PC-3 (cell line): ENCODE measurements at regions of chr5 and their contacts with region 1.

Region 1: GRCh38 chr5:149731639-149732323 is 1.7 kb downstream of the PPARGC1B start:
- DNase-seq: peak; percentile 93
- ATAC-seq: peak; percentile 57
- H3K4me3 ChIP-seq: peak overlapping the region; percentile 82
- H3K27ac ChIP-seq: 0 out of 2 replicates have a peak overlapping the region, but pooled peaks have one; percentile 11
- H3K4me1 ChIP-seq: peaks cover 22% of the 10 kb centered on the region
- H3K27me3 ChIP-seq: no peaks in the 10 kb centered on the region
- CTCF ChIP-seq: no peak

Region 2: GRCh38 chr5:149636851-149637246 is 94.9 kb before region 1 on chr5:
- CTCF ChIA-PET with region 1: no interaction called
- POLR2A ChIA-PET with region 1: interaction called, 9 read pairs
- intact Hi-C with region 1: loop called (anchors 2 kb)
- DNase-seq: peak; percentile 98
- ATAC-seq: peak; percentile 85
- H3K4me3 ChIP-seq: no peak overlapping the region
- H3K27ac ChIP-seq: no peak overlapping the region
- H3K4me1 ChIP-seq: peaks cover 26% of the 10 kb centered on the region
- H3K27me3 ChIP-seq: no peaks in the 10 kb centered on the region
- CTCF ChIP-seq: peak; percentile 100

Region 3: GRCh38 chr5:149697001-149697400 is 34.8 kb before region 1 on chr5:
- CTCF ChIA-PET with region 1: interaction called, 7 read pairs
- POLR2A ChIA-PET with region 1: interaction called, 10 read pairs
- intact Hi-C with region 1: loop called (anchors 1 kb)
- DNase-seq: peak; percentile 89
- ATAC-seq: peak; percentile 81
- H3K4me3 ChIP-seq: no peak overlapping the region
- H3K27ac ChIP-seq: no peak overlapping the region
- H3K4me1 ChIP-seq: peaks cover 18% of the 10 kb centered on the region
- H3K27me3 ChIP-seq: no peaks in the 10 kb centered on the region
- CTCF ChIP-seq: no peak

Region 4: GRCh38 chr5:149828161-149828884 is 96.5 kb after region 1 on chr5:
- CTCF ChIA-PET with region 1: no interaction called
- POLR2A ChIA-PET with region 1: no interaction called
- intact Hi-C with region 1: loop called (anchors 1 kb)
- DNase-seq: peak; percentile 97
- ATAC-seq: peak; percentile 95
- H3K4me3 ChIP-seq: no peak overlapping the region
- H3K27ac ChIP-seq: no peak overlapping the region
- H3K4me1 ChIP-seq: no peaks in the 10 kb centered on the region
- H3K27me3 ChIP-seq: no peaks in the 10 kb centered on the region
- CTCF ChIP-seq: peak; percentile 99

Region 5: GRCh38 chr5:150000256-150000989 is 268.6 kb after region 1 on chr5 and contains the starts of genes HMGXB3 and TIGD6:
- CTCF ChIA-PET with region 1: no interaction called
- POLR2A ChIA-PET with region 1: interaction called, 3 read pairs
- intact Hi-C with region 1: loop called (anchors 10 kb)
- DNase-seq: peak; percentile 99
- ATAC-seq: peak; percentile 89
- H3K4me3 ChIP-seq: peak within 1 kb of the TSS; percentile 89
- H3K27ac ChIP-seq: peak within 1 kb of the TSS; percentile 63
- H3K4me1 ChIP-seq: peaks cover 22% of the 10 kb centered on the region
- H3K27me3 ChIP-seq: no peaks in the 10 kb centered on the region
- CTCF ChIP-seq: no peak
- total RNA-seq, gene HMGXB3: 56.6 and 84.7 TPM in 2 replicates
- total RNA-seq, gene TIGD6: 3.8 and 5.7 TPM in 2 replicates